Mammary epithelial cell (primary cell): ENCODE measurements at regions of chr17 and their contacts with region 1.

Region 1: GRCh38 chr17:40993839-40994238 is at the start of gene KRTAP3-3:
- DNase-seq: no peak
- H3K4me3 ChIP-seq: no peak within 1 kb of the TSS
- H3K27ac ChIP-seq: no peak within 1 kb of the TSS
- H3K4me1 ChIP-seq: no peaks in the 10 kb centered on the region
- H3K27me3 ChIP-seq: no peaks in the 10 kb centered on the region
- CTCF ChIP-seq: no peak
- total RNA-seq, gene KRTAP3-3: not detected

Region 2: DNA sequence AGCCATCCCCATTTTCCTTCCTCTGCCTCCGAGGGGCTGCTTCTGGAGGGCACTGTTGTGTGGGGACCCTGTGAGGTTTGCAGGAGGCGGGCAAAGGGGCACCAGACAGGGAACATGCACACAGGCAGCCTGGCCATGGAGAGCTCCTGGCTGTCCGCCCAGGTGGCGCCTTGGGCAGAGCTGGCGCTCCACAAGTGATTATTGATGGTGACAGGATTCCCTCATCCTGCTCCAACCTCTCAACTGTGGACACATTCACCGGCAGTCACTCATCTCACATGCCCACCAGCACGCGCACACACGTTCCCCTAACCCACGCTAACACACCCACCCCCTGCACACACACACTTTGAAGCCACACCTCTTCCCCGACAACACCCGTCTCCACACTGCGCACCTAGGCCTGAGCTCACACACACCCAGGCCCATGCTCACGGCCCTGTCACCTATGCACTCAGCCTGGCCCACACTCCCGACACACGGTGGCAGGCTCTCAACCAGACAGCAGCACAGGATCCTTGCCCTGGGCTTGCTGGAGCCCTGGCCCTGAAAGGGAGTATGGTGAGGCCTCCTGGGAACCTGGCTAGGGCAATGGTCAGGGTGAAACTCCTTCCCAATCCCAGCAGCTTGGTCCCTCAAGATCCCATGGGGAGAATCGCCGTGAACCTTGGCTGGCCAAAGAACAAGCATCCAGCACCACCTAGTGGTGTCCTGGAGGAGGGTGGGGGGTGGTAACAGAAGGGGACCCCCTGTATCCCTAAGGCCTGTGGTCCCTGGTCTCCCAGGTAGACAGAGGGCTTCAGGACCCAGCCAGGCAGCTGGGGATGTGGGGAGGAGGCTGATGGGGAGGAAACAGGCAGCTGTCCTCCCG is 1322.0 kb before region 1 on chr17:
- CTCF ChIA-PET with region 1: no interaction called
- dilution Hi-C with region 1: no loop called
- in situ Hi-C with region 1: no loop called
- intact Hi-C with region 1: no loop called
- DNase-seq: peak; percentile 15
- H3K4me3 ChIP-seq: no peak overlapping the region
- H3K27ac ChIP-seq: no peak overlapping the region
- H3K4me1 ChIP-seq: peaks cover 8% of the 10 kb centered on the region
- H3K27me3 ChIP-seq: no peaks in the 10 kb centered on the region
- CTCF ChIP-seq: peak; percentile 22 to 56

Region 3: GRCh38 chr17:40937384-40937819 is 56.4 kb before region 1 on chr17 and contains the start of gene KRT23:
- CTCF ChIA-PET with region 1: no interaction called
- dilution Hi-C with region 1: no loop called
- in situ Hi-C with region 1: no loop called
- intact Hi-C with region 1: no loop called
- DNase-seq: peak; percentile 53
- H3K4me3 ChIP-seq: no peak within 1 kb of the TSS
- H3K27ac ChIP-seq: peak within 1 kb of the TSS; percentile 54
- H3K4me1 ChIP-seq: peaks cover 19% of the 10 kb centered on the region
- H3K27me3 ChIP-seq: no peaks in the 10 kb centered on the region
- CTCF ChIP-seq: no peak
- total RNA-seq, gene KRT23: 1.5 to 94.5 TPM

Region 4: DNA sequence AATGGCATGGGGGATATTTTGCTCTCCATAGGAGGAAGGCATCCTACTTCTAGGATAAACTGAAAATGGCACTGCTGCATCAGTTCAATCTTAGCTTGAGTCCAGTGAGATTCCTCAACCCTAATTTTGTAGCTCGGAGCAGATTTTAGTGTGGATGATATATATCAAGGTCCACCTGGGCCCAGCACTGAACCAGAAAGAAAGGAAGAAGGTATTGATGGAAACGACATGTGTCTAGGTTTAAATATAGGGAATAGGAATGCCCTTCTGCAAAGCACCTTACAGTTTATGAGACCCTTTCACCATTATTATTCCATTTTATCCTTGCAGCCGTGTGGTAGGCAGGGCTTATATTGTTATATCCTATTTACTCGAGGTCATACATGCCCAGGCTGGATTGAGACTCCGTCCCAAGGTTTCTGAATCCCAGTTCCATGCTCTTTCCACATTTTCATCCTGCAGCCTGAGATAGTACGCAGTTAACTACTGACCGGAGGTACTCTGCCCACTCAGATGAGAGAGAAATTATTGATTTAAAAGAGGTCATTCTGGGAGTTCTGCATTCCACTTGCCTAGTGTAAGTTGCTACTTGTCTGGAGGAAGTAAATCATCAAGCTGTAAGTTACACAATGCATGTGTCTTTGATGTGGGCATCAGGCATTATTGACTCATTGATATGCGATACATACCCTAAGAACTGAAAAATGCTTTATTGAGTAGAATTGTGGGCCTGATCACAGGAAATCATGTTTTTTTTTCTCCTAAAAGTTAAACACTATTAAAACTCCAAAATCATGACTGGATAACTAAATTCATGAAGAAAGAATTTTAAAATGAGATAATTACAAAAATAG is 37.2 kb before region 1 on chr17:
- CTCF ChIA-PET with region 1: interaction called, 11 read pairs
- dilution Hi-C with region 1: no loop called
- in situ Hi-C with region 1: no loop called
- intact Hi-C with region 1: no loop called
- DNase-seq: peak; percentile 99
- H3K4me3 ChIP-seq: no peak overlapping the region
- H3K27ac ChIP-seq: peak overlapping the region; percentile 99
- H3K4me1 ChIP-seq: peaks cover 75% of the 10 kb centered on the region
- H3K27me3 ChIP-seq: no peaks in the 10 kb centered on the region
- CTCF ChIP-seq: no peak

Region 5: DNA sequence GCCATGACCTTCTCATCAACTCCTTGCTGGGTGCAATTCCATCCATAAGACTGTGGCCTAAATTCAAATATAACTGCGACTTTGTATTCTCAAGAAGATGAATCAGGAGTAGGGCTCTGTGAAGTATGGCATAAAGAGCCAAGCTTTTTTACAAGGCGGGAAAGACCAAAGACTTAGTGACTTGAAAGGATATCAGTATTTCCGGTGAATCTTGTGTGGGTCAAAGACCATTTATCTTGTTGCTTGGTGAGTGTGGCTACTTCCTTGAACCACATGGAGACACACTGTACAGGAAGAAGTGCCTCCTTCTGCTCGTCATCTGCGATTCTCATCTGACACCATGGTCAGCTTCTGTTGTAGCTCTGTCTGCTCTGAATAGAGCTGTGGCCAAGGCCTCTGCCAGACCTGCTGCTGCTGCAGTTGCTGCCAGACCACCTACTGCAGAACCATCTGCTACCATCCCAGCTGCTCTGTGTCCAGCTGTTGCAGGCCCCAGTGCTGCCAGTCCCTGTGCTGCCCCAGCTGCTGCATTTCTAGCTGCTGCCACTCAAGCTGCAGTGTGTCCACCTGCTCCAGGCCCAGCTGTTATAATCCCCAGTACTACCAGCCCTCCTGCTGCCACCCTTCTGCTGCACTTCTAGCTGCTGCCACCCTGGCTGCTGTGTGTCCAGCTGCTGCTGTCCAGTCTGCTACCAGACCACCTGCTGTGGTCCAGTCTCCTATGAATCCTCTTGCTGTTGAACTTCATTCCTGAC is 77.9 kb after region 1 on chr17:
- CTCF ChIA-PET with region 1: no interaction called
- dilution Hi-C with region 1: loop called (anchors 5 kb)
- in situ Hi-C with region 1: no loop called
- intact Hi-C with region 1: no loop called
- DNase-seq: no peak
- H3K4me3 ChIP-seq: no peak overlapping the region
- H3K27ac ChIP-seq: no peak overlapping the region
- H3K4me1 ChIP-seq: peaks cover 5% of the 10 kb centered on the region
- H3K27me3 ChIP-seq: no peaks in the 10 kb centered on the region
- CTCF ChIP-seq: no peak